ENCODE measurements at regions of chr11 and their contacts with region 1.

Region 1: GRCh38 chr11:45930031-45930794 is 7.8 kb downstream of the LARGE2 start:
- H3K4me3 Mint-ChIP-seq: peak overlapping the region; percentile 22
- H3K27ac Mint-ChIP-seq: peak overlapping the region; percentile 58
- H3K4me1 Mint-ChIP-seq: peaks cover 57% of the 10 kb centered on the region
- H3K27me3 Mint-ChIP-seq: peaks cover 28% of the 10 kb centered on the region

Region 2: DNA sequence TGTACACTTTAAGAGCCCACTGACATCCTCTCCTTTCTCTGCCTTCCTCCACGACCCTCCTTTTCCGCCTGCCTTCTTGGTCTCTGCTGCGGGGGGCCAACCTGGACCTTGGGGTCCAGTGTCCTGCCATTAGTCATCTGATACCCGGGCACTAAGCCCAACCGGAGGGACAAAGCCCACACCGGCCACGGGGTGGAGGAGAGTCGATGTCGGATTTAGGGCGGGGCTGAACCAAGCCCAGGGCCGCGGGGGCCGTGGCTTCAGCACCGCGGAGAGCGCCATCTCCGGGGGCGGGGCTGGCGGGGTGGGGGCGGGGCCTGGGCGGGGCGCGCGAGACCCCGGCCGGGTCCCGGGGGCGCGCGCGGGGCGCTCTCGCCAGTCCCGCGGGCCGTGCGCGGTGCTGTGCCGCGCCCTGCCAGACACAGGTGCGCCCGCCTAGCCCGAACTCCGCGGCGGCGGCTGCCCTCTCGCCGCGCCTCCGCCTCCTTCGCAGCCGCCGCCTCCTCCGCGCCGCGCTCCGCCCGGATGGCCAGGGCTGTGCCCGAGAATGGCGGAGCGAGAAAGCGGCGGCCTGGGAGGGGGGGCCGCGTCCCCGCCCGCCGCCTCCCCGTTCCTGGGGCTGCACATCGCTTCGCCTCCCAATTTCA is 44.8 kb before region 1 on chr11 and contains the start of gene MAPK8IP1:
- intact Hi-C with region 1: loop called (anchors 10 kb)
- H3K4me3 Mint-ChIP-seq: peak within 1 kb of the TSS; percentile 63
- H3K27ac Mint-ChIP-seq: no peak within 1 kb of the TSS
- H3K4me1 Mint-ChIP-seq: peaks cover 12% of the 10 kb centered on the region
- H3K27me3 Mint-ChIP-seq: peaks cover 43% of the 10 kb centered on the region

Region 3: DNA sequence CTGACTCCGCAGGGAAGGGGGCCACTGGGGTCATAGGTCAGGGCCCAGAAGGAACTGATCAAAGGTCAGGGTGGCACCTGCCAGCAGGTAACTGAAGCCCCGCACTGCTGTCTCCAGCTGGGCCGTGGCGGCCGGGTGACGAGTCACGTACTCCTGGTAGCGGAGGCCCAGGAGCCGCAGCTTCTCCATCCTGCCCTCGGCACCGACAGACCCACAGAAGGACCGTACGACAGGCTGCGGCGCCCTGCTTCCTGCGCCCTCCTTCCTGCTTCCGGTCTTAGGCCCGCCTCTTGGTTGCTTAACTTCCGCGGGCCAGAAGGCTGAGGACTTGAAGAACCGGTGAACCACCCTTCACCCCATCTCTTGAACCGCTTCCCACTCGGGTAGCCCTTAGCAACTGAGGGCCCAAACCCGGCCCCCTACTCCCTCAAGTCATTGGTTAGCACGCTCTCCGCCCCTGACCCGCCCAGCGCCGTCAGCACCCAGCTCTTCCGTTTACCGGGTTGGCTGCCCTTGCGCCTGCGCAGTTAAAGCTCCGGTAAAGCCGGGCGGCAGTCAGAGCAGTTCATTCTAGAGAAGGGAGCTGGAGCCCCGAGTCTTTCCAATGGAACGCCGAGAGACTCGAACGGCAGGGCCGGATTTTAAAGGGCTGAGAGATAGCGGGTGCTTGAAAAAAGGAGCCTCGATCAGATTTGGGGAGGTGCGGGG is 12.4 kb before region 1 on chr11 and contains the start of gene PEX16:
- intact Hi-C with region 1: loop called (anchors 1 kb)
- H3K4me3 Mint-ChIP-seq: peak within 1 kb of the TSS; percentile 95
- H3K27ac Mint-ChIP-seq: peak within 1 kb of the TSS; percentile 98
- H3K4me1 Mint-ChIP-seq: peaks cover 23% of the 10 kb centered on the region
- H3K27me3 Mint-ChIP-seq: peaks cover 21% of the 10 kb centered on the region

Measured in dendritic cell treated with granulocyte-macrophage colony-stimulating factor and Interleukin-4, amounts not matched to agents 40 ng/mL and 50 ng/mL, for 4 days (primary cell).